H1 (cell line): ENCODE measurements at regions of chr5 and their contacts with region 1.

Region 1: GRCh38 chr5:33457126-33457525 is 16.4 kb downstream of the TARS1 start:
- DNase-seq: no peak
- H3K4me3 ChIP-seq: no peak overlapping the region
- H3K27ac ChIP-seq: no peak overlapping the region
- H3K4me1 ChIP-seq: no peaks in the 10 kb centered on the region
- H3K27me3 ChIP-seq: no peaks in the 10 kb centered on the region
- CTCF ChIP-seq: no peak
- EP300 ChIP-seq: no peak
- POLR2A ChIP-seq: no peak
- RAD21 ChIP-seq: no peak

Region 2: DNA sequence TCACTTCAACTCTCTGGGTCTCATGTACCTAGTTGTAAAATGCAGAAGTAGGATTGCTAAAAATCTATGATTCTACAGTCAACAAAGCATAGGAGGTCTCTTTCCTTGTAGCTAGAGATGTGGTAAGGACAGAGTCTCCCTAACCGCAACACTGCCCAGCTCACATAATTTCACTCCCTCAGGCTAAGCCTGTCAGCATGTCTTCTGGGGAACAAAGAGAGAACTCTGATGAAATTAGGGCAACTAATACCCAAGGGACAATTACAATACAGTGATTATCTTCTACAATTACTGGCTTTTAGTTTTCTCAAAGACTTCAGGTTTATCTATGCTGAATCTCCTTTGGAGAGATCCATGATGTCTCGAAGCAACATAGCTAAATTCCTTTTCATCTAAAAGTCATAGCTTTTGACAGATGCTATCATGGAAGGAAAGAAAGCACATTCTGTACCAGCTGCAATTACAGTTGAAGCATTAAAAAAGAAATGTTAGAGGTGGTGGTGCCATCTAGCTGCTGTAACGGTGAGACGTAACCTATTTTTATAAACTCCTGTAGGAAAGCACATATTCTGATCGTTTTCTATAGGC is 157.4 kb before region 1 on chr5:
- CTCF ChIA-PET with region 1: no interaction called
- POLR2A ChIA-PET with region 1: no interaction called
- DNase-seq: no peak
- H3K4me3 ChIP-seq: no peak overlapping the region
- H3K27ac ChIP-seq: no peak overlapping the region
- H3K4me1 ChIP-seq: peaks cover 0 to 3% (median 1%) of the 10 kb centered on the region in 4 experiments; a peak in 2 of 7 replicates
- H3K27me3 ChIP-seq: no peaks in the 10 kb centered on the region
- CTCF ChIP-seq: peak in 1 of 3 experiments; percentile 51; a peak in 2 of 4 replicates
- EP300 ChIP-seq: no peak
- POLR2A ChIP-seq: no peak
- RAD21 ChIP-seq: peak; percentile 58 to 59

Region 3: GRCh38 chr5:33336891-33337636 is 120.1 kb before region 1 on chr5:
- CTCF ChIA-PET with region 1: no interaction called
- POLR2A ChIA-PET with region 1: no interaction called
- DNase-seq: no peak
- H3K4me3 ChIP-seq: no peak overlapping the region
- H3K27ac ChIP-seq: no peak overlapping the region
- H3K4me1 ChIP-seq: peaks cover 0 to 5% (median under 1%) of the 10 kb centered on the region in 4 experiments; a peak in 2 of 7 replicates
- H3K27me3 ChIP-seq: no peaks in the 10 kb centered on the region
- CTCF ChIP-seq: no peak
- EP300 ChIP-seq: no peak
- POLR2A ChIP-seq: no peak
- RAD21 ChIP-seq: no peak

Region 4: GRCh38 chr5:33401482-33402390 is 55.4 kb before region 1 on chr5:
- CTCF ChIA-PET with region 1: no interaction called
- POLR2A ChIA-PET with region 1: no interaction called
- DNase-seq: no peak
- H3K4me3 ChIP-seq: no peak overlapping the region
- H3K27ac ChIP-seq: no peak overlapping the region
- H3K4me1 ChIP-seq: peaks cover 0 to 4% (median 0%) of the 10 kb centered on the region in 4 experiments; a peak in 1 of 7 replicates
- H3K27me3 ChIP-seq: no peaks in the 10 kb centered on the region
- CTCF ChIP-seq: no peak
- EP300 ChIP-seq: no peak
- POLR2A ChIP-seq: no peak
- RAD21 ChIP-seq: no peak

Region 5: GRCh38 chr5:33440482-33441240 is 16.5 kb before region 1 on chr5 and contains the start of gene TARS1:
- CTCF ChIA-PET with region 1: interaction called, 4 read pairs
- POLR2A ChIA-PET with region 1: interaction called, 104 read pairs
- DNase-seq: peak; percentile 95 to 96
- H3K4me3 ChIP-seq: peak within 1 kb of the TSS; percentile 81 to 97 (median 88)
- H3K27ac ChIP-seq: peak within 1 kb of the TSS; percentile 89
- H3K4me1 ChIP-seq: peaks cover 0 to 9% (median 4%) of the 10 kb centered on the region in 4 experiments; a peak in 3 of 7 replicates
- H3K27me3 ChIP-seq: no peaks in the 10 kb centered on the region
- CTCF ChIP-seq: no peak
- EP300 ChIP-seq: no peak
- POLR2A ChIP-seq: peak; percentile 90 to 98
- RAD21 ChIP-seq: no peak
- total RNA-seq, gene TARS1: 445 TPM in 2 replicates

Region 6: DNA sequence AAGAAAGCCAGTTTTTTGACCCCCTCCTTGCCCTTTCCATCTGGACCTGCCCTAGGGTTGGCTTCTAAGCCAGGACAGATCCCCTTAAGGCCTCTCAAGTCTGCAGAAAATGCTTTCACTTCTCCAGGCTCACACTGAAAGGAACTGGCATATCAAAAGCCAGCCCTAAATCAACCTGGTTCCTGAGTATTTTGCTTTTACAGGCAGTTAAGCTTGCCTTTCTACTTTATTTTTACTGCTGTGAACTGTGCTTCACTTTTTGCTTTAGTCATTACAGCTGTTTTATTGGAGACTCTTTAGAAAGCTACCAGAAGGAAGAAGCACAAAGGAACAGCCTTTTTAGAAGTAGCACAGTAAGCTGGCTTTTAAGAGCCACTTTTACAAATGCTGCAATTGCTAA is 11.3 kb before region 1 on chr5:
- CTCF ChIA-PET with region 1: interaction called, 4 read pairs
- POLR2A ChIA-PET with region 1: interaction called, 104 read pairs
- DNase-seq: no peak
- H3K4me3 ChIP-seq: peak overlapping the region in 1 of 4 experiments; percentile 46; a peak in 1 of 8 replicates
- H3K27ac ChIP-seq: no peak overlapping the region
- H3K4me1 ChIP-seq: peaks cover 2 to 24% (median 6%) of the 10 kb centered on the region in 4 experiments; a peak in 3 of 7 replicates
- H3K27me3 ChIP-seq: no peaks in the 10 kb centered on the region
- CTCF ChIP-seq: no peak
- EP300 ChIP-seq: no peak
- POLR2A ChIP-seq: 0 out of 3 replicates have a peak, but pooled peaks of 1 of the 2 experiments have one; percentile 37
- RAD21 ChIP-seq: no peak

Region 7: GRCh38 chr5:33470544-33470943 is 13.4 kb after region 1 on chr5:
- CTCF ChIA-PET with region 1: interaction called, 10 read pairs
- POLR2A ChIA-PET with region 1: interaction called, 179 read pairs
- DNase-seq: no peak
- H3K4me3 ChIP-seq: no peak overlapping the region
- H3K27ac ChIP-seq: no peak overlapping the region
- H3K4me1 ChIP-seq: peaks cover 0 to 9% (median 0%) of the 10 kb centered on the region in 4 experiments; a peak in 1 of 7 replicates
- H3K27me3 ChIP-seq: no peaks in the 10 kb centered on the region
- CTCF ChIP-seq: peak in 1 of 3 experiments; percentile 27; a peak in 2 of 4 replicates
- EP300 ChIP-seq: no peak
- POLR2A ChIP-seq: no peak; a peak in 1 of 3 replicates
- RAD21 ChIP-seq: peak; percentile 52 to 60

Region 8: DNA sequence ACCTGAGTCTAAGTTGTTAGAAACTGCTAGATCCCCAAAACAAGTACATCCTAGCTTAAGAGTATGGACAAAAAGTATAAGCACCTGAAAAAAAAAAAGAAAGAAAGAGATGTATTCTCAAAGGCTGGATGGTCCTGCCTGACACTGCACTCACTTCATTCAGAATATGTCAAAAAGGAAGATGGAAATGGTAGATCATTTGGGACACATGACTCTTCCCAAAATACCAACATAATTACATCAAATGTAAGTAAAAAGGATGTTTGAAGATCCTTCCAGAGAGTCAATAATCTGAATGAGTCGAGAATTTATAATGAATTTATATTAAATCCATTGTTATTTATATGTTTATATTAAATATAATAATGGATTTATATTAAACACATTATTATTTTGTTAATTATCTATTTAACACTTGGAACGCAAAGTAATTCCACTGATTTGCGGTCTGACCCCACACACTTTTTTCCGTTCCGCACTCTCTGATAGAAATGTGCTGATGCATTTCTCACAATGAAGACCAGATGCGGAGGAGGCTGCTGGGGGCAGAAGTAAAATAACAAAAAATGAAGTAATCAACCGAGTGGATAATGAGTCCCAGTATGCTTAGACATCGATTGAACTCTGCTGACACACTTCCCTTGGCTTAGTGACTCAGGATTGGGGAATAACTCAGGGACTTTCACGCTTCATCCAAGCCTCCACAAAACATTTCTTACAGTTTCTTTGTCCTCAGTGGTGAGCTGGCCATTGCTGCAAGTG is 233.4 kb after region 1 on chr5:
- CTCF ChIA-PET with region 1: no interaction called
- POLR2A ChIA-PET with region 1: no interaction called
- DNase-seq: no peak
- H3K4me3 ChIP-seq: no peak overlapping the region
- H3K27ac ChIP-seq: no peak overlapping the region
- H3K4me1 ChIP-seq: peaks cover 0 to 4% (median 2%) of the 10 kb centered on the region in 4 experiments; a peak in 3 of 7 replicates
- H3K27me3 ChIP-seq: peaks cover 0 to 1% (median 0%) of the 10 kb centered on the region in 4 experiments; a peak in 1 of 7 replicates
- CTCF ChIP-seq: no peak
- EP300 ChIP-seq: no peak
- POLR2A ChIP-seq: no peak
- RAD21 ChIP-seq: no peak